Mammary epithelial cell (primary cell): ENCODE measurements at regions of chr7 and their contacts with region 1.

Region 1: DNA sequence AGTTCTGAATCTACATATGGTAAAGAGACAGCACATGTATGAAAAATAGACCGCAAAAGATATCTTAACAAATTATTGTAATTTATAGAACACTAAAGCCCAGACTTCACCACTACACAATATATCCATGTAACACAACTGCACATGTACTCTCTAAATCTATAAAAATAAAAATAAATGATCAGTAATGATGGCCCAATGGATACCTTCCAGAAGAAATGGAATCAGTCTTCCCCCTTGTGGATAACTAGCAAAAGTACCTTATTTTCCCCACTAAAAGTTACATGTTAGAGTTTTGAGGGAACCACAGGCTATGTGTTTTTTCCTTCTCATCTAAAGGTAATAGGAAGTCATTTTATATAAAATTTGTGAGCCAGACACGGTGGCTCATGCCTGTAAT is 25.7 kb downstream of the C7orf25 start:
- DNase-seq: peak; percentile 14
- H3K4me3 ChIP-seq: no peak overlapping the region
- H3K27ac ChIP-seq: no peak overlapping the region
- H3K4me1 ChIP-seq: peaks cover 22% of the 10 kb centered on the region
- H3K27me3 ChIP-seq: no peaks in the 10 kb centered on the region
- CTCF ChIP-seq: peak; percentile 40 to 41

Region 2: GRCh38 chr7:42931834-42932651 is 45.9 kb after region 1 on chr7 and contains the starts of genes MRPL32 and PSMA2:
- CTCF ChIA-PET with region 1: no interaction called
- dilution Hi-C with region 1: no loop called
- in situ Hi-C with region 1: no loop called
- intact Hi-C with region 1: loop called (anchors 2 kb)
- DNase-seq: peak; percentile 97
- H3K4me3 ChIP-seq: peak within 1 kb of the TSS; percentile 78 to 92 (median 88)
- H3K27ac ChIP-seq: peak within 1 kb of the TSS; percentile 91
- H3K4me1 ChIP-seq: peaks cover 29% of the 10 kb centered on the region
- H3K27me3 ChIP-seq: no peaks in the 10 kb centered on the region
- CTCF ChIP-seq: no peak
- total RNA-seq, gene MRPL32: 29.2 to 77.0 TPM
- total RNA-seq, gene PSMA2: 54.0 to 97.0 TPM

Region 3: GRCh38 chr7:43764039-43764761 is 878.1 kb after region 1 on chr7:
- CTCF ChIA-PET with region 1: no interaction called
- dilution Hi-C with region 1: no loop called
- in situ Hi-C with region 1: no loop called
- intact Hi-C with region 1: no loop called
- DNase-seq: peak; percentile 67
- H3K4me3 ChIP-seq: peak overlapping the region in 1 of 3 experiments; percentile 8
- H3K27ac ChIP-seq: peak overlapping the region; percentile 42
- H3K4me1 ChIP-seq: peaks cover 24% of the 10 kb centered on the region
- H3K27me3 ChIP-seq: no peaks in the 10 kb centered on the region
- CTCF ChIP-seq: no peak